HEK293 (cell line): ENCODE measurements at regions of chr2 and their contacts with region 1.

Region 1: DNA sequence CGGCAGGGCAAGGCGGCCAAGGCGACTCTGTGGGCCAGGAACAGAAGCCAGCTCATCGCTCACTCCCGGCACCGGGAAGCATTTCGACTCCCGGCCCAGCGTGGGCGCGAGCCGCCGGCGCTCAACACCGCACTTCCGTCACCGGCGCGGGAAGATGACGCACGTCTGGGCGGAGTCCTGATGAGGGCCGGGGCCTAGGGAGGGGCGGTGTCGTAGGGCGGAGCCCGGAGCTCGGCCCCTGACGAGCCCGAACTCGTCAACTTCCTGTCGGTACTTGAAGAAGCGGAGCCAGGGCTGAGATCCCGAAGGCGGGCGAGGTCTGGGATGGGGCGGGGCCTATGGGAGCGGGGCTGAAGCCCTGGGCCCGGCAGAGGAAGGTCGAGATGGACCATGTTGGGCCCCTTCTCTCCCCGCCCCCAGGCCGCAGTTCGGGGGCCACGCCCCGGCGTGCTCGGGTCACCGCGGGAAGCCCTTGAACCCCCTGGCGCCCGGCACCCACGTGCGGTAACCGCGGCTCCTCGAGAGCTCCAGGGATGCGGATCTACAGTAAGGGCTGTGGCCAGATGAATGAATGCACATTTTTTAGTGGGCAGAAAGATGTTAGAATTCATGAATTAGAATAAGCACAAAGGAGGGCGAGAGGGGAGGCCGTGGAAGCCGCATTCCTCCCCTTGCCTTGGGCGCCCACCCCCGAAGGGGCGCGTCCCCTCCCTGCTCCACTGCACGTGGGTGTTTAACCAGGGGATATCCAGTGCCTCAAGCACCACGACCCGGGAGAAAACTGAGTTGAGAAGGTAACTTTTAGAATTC is at the start of gene RNASEH1:
- H3K4me3 ChIP-seq: peak within 1 kb of the TSS; percentile 96
- H3K27ac ChIP-seq: peak within 1 kb of the TSS; percentile 73
- H3K4me1 ChIP-seq: 0 out of 2 replicates have a peak, but pooled peaks cover 3% of the 10 kb centered on the region
- CTCF ChIP-seq: no peak

Region 2: DNA sequence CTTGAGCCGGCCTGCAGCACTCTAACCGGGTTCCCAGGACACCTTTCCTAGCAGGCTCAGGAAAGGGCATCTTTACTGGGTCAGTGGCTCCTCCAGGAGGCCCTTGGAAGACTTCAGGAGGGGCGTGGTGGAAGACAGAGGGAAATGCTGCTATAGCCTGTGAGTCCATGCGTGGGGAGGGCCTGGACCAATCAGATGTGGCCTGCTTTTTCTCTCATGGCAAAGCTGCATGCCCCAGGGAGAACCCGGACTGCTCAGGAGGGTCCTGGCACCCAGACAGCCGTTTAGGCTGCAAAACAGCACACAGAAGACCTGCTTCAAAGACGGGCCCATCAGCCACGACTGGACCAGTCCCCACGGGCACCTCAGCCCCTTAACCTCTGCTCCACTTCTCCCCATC is 265.2 kb before region 1 on chr2:
- CTCF ChIA-PET with region 1: no interaction called
- POLR2A ChIA-PET with region 1: no interaction called
- H3K4me3 ChIP-seq: no peak overlapping the region
- H3K27ac ChIP-seq: no peak overlapping the region
- H3K4me1 ChIP-seq: no peaks in the 10 kb centered on the region
- CTCF ChIP-seq: no peak

Region 3: GRCh38 chr2:3518496-3519254 is 39.7 kb before region 1 on chr2:
- CTCF ChIA-PET with region 1: no interaction called
- POLR2A ChIA-PET with region 1: interaction called, 19 read pairs
- H3K4me3 ChIP-seq: peak overlapping the region; percentile 91
- H3K27ac ChIP-seq: peak overlapping the region; percentile 92
- H3K4me1 ChIP-seq: 0 out of 2 replicates have a peak, but pooled peaks cover 5% of the 10 kb centered on the region
- CTCF ChIP-seq: no peak; the same call in 1 of the 2 replicates

Region 4: GRCh38 chr2:3536682-3537632 is 21.5 kb before region 1 on chr2:
- CTCF ChIA-PET with region 1: no interaction called
- POLR2A ChIA-PET with region 1: interaction called, 11 read pairs
- H3K4me3 ChIP-seq: peak overlapping the region; percentile 35
- H3K27ac ChIP-seq: no peak overlapping the region
- H3K4me1 ChIP-seq: no peaks in the 10 kb centered on the region; the same call in 1 of the 2 replicates
- CTCF ChIP-seq: 0 out of 2 replicates have a peak, but pooled peaks have one; percentile 18

Region 5: GRCh38 chr2:3575534-3576262 is 17.3 kb after region 1 on chr2:
- CTCF ChIA-PET with region 1: no interaction called
- POLR2A ChIA-PET with region 1: interaction called, 25 read pairs
- H3K4me3 ChIP-seq: peak overlapping the region; percentile 90
- H3K27ac ChIP-seq: peak overlapping the region; percentile 97
- H3K4me1 ChIP-seq: peaks cover 7% of the 10 kb centered on the region; the same call in 1 of the 2 replicates
- CTCF ChIP-seq: no peak

Region 6: GRCh38 chr2:3585261-3586109 is 27.1 kb after region 1 on chr2:
- CTCF ChIA-PET with region 1: interaction called, 3 read pairs
- POLR2A ChIA-PET with region 1: interaction called, 18 read pairs
- H3K4me3 ChIP-seq: no peak overlapping the region
- H3K27ac ChIP-seq: no peak overlapping the region
- H3K4me1 ChIP-seq: no peaks in the 10 kb centered on the region; the same call in 1 of the 2 replicates
- CTCF ChIP-seq: no peak